ENCODE measurements at regions of chr12 and their contacts with region 1.

Region 1: GRCh38 chr12:12032851-12033588 is 37.7 kb upstream of the BCL2L14 start:
- DNase-seq: peak; percentile 91
- H3K4me3 ChIP-seq: peak overlapping the region; percentile 22 to 67 (median 49)
- H3K27ac ChIP-seq: peak overlapping the region; percentile 73
- H3K4me1 ChIP-seq: peaks cover 8% of the 10 kb centered on the region
- H3K27me3 ChIP-seq: peaks cover 0 to under 1% of the 10 kb centered on the region in 2 experiments
- CTCF ChIP-seq: peak; percentile 78 to 82
- POLR2A ChIP-seq: peak; percentile 52

Region 2: DNA sequence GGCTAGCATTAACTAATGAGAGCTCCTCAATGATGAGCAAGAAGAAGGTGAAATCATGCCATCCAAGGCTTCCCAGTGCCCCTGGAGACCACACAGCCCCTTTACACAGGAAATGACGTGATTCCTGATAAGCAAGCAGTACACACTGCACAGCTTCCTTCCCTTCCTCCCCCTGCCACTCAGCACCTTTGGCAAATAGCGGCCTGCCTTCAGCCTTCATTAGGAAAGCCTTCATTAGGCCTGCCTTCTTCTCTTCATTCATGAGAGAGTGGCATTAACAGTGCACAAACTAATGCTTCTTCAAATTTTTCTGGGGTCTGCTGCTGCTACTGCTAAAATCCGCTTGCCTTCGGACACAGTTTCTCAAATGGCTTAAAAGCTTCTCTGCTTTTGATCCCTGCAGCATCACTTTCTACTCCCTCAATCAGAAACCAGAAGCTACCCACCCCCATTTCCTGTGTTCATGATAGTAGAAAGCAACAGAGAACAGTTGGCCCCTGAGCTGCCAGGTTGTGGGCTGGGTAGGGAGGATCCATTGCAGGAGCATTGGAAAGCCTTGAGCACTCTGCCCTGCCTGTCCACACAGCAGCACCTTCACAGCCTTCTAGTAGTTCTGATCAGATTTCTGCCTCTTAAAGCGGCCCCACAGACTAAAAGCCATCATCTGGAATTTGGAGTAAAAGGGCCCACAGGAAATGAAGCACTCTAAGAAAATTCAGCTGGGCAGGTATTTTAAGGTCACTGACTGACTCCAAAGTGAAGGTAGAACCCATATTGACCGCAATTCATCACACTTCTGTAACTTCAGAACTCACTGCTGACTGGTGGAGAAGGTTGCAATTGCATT is 487.3 kb before region 1 on chr12:
- CTCF ChIA-PET with region 1: interaction called, 16 read pairs
- POLR2A ChIA-PET with region 1: no interaction called
- dilution Hi-C with region 1: no loop called
- intact Hi-C with region 1: no loop called
- DNase-seq: peak; percentile 66
- H3K4me3 ChIP-seq: no peak overlapping the region
- H3K27ac ChIP-seq: peak overlapping the region; percentile 47
- H3K4me1 ChIP-seq: peaks cover 12% of the 10 kb centered on the region
- H3K27me3 ChIP-seq: peaks cover 0 to 2% of the 10 kb centered on the region in 2 experiments
- CTCF ChIP-seq: no peak
- POLR2A ChIP-seq: no peak

Region 3: DNA sequence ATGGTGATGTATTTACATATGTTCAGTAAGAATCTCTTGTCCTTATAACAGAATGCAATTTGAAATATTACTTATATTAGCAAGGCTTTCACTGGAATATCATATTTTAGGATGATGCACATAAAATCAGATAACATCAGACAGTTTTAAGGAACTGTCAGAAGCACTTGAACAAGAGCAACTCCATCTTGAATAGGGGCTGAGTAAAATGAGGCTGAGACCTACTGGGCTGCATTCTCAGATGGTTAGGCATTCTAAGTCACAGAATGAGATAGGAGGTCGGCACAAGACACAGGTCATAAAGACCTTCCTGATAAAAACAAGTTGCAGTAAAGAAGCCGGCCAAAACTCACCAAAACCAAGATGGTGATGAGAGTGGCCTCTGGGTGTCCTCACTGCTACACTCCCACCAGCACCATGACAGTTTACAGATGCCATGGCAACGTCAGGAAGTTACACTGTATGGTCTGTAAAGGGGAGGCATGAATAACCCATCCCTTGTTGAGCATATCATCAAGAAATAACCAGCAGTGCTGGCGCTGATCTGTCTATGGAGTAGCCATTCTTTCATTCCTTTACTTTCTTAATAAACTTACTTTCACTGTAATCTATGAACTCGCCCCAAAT is 411.1 kb before region 1 on chr12:
- CTCF ChIA-PET with region 1: interaction called, 14 read pairs
- POLR2A ChIA-PET with region 1: no interaction called
- dilution Hi-C with region 1: no loop called
- intact Hi-C with region 1: loop called (anchors 1 kb)
- DNase-seq: peak; percentile 24
- H3K4me3 ChIP-seq: no peak overlapping the region
- H3K27ac ChIP-seq: no peak overlapping the region
- H3K4me1 ChIP-seq: no peaks in the 10 kb centered on the region
- H3K27me3 ChIP-seq: no peaks in the 10 kb centered on the region
- CTCF ChIP-seq: no peak
- POLR2A ChIP-seq: no peak

Region 4: GRCh38 chr12:11798856-11799501 is 234.0 kb before region 1 on chr12:
- CTCF ChIA-PET with region 1: interaction called, 7 read pairs
- POLR2A ChIA-PET with region 1: no interaction called
- dilution Hi-C with region 1: no loop called
- intact Hi-C with region 1: loop called (anchors 1 kb)
- DNase-seq: peak; percentile 98
- H3K4me3 ChIP-seq: no peak overlapping the region
- H3K27ac ChIP-seq: peak overlapping the region; percentile 99
- H3K4me1 ChIP-seq: peaks cover 75% of the 10 kb centered on the region
- H3K27me3 ChIP-seq: no peaks in the 10 kb centered on the region
- CTCF ChIP-seq: no peak
- POLR2A ChIP-seq: peak; percentile 84

Region 5: GRCh38 chr12:11885261-11886038 is 147.6 kb before region 1 on chr12:
- CTCF ChIA-PET with region 1: interaction called, 4 read pairs
- POLR2A ChIA-PET with region 1: no interaction called
- dilution Hi-C with region 1: no loop called
- intact Hi-C with region 1: loop called (anchors 1 kb)
- DNase-seq: peak; percentile 95
- H3K4me3 ChIP-seq: peak overlapping the region in 1 of 3 experiments; percentile 9
- H3K27ac ChIP-seq: peak overlapping the region; percentile 92
- H3K4me1 ChIP-seq: peaks cover 49% of the 10 kb centered on the region
- H3K27me3 ChIP-seq: no peaks in the 10 kb centered on the region
- CTCF ChIP-seq: no peak
- POLR2A ChIP-seq: peak; percentile 51

Measured in endothelial cell of umbilical vein (primary cell).